ENCODE measurements at regions of chr7 and their contacts with region 1.

Region 1: GRCh38 chr7:143240291-143241168 is 18.7 kb downstream of the TAS2R40 start:
- DNase-seq: peak; percentile 85
- H3K4me3 Mint-ChIP-seq: no peak overlapping the region
- H3K27ac Mint-ChIP-seq: no peak overlapping the region
- H3K4me1 Mint-ChIP-seq: peaks cover 22% of the 10 kb centered on the region
- H3K27me3 Mint-ChIP-seq: peaks cover 1% of the 10 kb centered on the region

Region 2: DNA sequence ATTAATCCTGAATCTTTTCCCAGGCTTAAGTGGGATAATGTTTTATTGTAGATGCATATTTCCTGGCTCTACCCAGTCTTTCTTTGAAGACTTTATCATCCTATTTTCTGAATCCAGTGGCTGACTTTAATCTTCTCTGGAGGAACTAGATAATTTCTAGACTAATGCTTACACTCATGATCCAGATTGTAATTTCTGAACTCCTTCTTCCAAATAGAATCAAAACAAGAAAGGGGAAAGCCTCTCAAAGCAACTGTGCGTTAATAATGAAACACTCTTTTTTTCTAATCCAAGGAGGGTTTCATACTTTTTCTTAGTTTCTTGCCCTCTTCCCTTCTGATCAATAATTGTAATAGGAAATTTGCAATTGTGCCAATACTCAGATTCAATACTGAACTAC is 30.7 kb after region 1 on chr7:
- CTCF ChIA-PET with region 1: interaction called, 6 read pairs
- intact Hi-C with region 1: loop called (anchors 2 kb)
- DNase-seq: no peak
- H3K4me3 Mint-ChIP-seq: no peak overlapping the region
- H3K27ac Mint-ChIP-seq: peak overlapping the region; percentile 72
- H3K4me1 Mint-ChIP-seq: peaks cover 33% of the 10 kb centered on the region
- H3K27me3 Mint-ChIP-seq: no peaks in the 10 kb centered on the region

Region 3: DNA sequence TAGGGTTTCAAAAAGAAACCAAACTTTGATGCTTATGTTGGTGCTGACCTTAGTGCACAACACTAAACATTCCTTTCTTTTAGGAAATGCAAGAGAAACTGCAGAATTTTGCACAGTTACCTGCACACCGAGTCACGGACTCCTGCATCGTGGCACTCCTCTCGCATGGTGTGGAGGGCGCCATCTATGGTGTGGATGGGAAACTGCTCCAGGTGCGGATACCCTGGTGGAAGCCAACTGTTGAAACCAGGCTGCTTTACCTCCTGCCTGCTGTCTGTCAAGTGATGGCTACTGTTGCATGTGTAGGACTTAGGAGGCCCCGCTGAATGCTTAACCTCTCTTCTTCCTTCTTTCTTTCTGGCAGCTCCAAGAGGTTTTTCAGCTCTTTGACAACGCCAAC is 59.3 kb after region 1 on chr7:
- CTCF ChIA-PET with region 1: interaction called, 137 read pairs
- intact Hi-C with region 1: loop called (anchors 1 kb)
- DNase-seq: peak; percentile 72
- H3K4me3 Mint-ChIP-seq: no peak overlapping the region
- H3K27ac Mint-ChIP-seq: peak overlapping the region; percentile 15
- H3K4me1 Mint-ChIP-seq: peaks cover 31% of the 10 kb centered on the region
- H3K27me3 Mint-ChIP-seq: no peaks in the 10 kb centered on the region

Region 4: GRCh38 chr7:143345428-143345900 is 104.9 kb after region 1 on chr7:
- CTCF ChIA-PET with region 1: interaction called, 23 read pairs
- intact Hi-C with region 1: no loop called
- DNase-seq: peak; percentile 78
- H3K4me3 Mint-ChIP-seq: peak overlapping the region; percentile 72
- H3K27ac Mint-ChIP-seq: no peak overlapping the region
- H3K4me1 Mint-ChIP-seq: peaks cover 8% of the 10 kb centered on the region
- H3K27me3 Mint-ChIP-seq: peaks cover 2% of the 10 kb centered on the region

Region 5: GRCh38 chr7:143408686-143409561 is 168.4 kb after region 1 on chr7 and contains the start of gene EPHA1:
- CTCF ChIA-PET with region 1: interaction called, 43 read pairs
- intact Hi-C with region 1: loop called (anchors 2 kb)
- DNase-seq: peak; percentile 56
- H3K4me3 Mint-ChIP-seq: peak within 1 kb of the TSS; percentile 70
- H3K27ac Mint-ChIP-seq: peak within 1 kb of the TSS; percentile 42
- H3K4me1 Mint-ChIP-seq: peaks cover 75% of the 10 kb centered on the region
- H3K27me3 Mint-ChIP-seq: no peaks in the 10 kb centered on the region
- total RNA-seq, gene EPHA1: 1.0 to 1.3 TPM

Region 6: GRCh38 chr7:144127703-144128334 is 887.3 kb after region 1 on chr7:
- CTCF ChIA-PET with region 1: no interaction called
- intact Hi-C with region 1: loop called (anchors 10 kb)
- DNase-seq: peak; percentile 97
- H3K4me3 Mint-ChIP-seq: no peak overlapping the region
- H3K27ac Mint-ChIP-seq: no peak overlapping the region
- H3K4me1 Mint-ChIP-seq: no peaks in the 10 kb centered on the region
- H3K27me3 Mint-ChIP-seq: no peaks in the 10 kb centered on the region

Measured in activated naive CD4-positive, alpha-beta T cell treated with anti-CD3 and anti-CD28 coated beads for 36 hours (primary cell).